Left cardiac atrium (tissue), 4 donors: ENCODE measurements at regions of chr9 and their contacts with region 1.

Region 1: GRCh38 chr9:406886-407654 is 192.4 kb downstream of the DOCK8 start:
- DNase-seq: no peak
- ATAC-seq: peak; percentile 54 to 84

Region 2: DNA sequence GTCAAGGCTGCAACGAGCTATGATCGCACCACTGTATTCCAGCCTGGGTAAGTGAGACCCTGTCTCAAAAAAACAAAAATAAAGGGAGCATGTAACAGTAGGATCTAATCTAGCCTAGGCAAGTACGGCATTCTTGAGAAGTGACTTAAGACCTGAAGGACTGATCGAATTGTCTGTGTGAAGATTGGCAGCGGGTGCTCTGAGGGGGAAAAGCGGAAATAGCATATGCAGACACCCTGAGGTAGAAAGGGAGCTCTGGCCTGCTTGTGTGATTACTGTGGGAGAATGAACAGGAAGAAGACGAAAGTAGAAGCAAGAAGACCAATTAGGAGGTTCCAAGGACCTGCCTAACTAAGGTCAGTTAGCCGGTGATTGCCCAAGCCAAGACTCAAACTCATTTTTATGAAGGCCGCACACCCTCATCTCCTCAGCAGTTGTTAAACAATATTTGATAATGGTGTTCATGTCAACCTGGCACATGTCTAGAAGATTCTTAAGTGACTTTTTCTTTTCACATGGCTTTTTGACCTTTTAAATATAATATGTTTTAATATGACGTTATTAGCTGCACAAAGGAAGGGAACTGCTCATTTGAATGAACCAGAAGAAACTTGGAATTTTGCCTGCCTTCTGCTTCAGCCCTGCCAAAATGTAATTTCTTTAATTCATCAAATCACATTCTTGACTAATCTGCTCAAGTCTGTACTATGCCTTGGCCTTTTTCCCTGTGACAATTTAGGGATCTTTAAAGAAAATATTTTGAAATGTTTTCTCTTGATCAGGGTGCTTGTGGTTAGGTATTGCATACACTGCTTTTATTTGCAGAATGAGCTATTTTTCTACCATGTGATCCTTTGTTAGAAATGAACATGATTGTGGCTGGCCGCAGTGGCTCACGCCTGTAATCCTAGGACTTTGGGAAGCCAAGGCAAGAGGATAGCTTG is 145.2 kb after region 1 on chr9:
- intact Hi-C with region 1: loop called in 1 of 2 experiments (anchors 10 kb)
- DNase-seq: no peak
- ATAC-seq: peak; percentile 54 to 58

Region 3: GRCh38 chr9:607417-607816 is 200.3 kb after region 1 on chr9:
- intact Hi-C with region 1: loop called in 1 of 2 experiments (anchors 10 kb)
- DNase-seq: no peak
- ATAC-seq: no peak

Region 4: DNA sequence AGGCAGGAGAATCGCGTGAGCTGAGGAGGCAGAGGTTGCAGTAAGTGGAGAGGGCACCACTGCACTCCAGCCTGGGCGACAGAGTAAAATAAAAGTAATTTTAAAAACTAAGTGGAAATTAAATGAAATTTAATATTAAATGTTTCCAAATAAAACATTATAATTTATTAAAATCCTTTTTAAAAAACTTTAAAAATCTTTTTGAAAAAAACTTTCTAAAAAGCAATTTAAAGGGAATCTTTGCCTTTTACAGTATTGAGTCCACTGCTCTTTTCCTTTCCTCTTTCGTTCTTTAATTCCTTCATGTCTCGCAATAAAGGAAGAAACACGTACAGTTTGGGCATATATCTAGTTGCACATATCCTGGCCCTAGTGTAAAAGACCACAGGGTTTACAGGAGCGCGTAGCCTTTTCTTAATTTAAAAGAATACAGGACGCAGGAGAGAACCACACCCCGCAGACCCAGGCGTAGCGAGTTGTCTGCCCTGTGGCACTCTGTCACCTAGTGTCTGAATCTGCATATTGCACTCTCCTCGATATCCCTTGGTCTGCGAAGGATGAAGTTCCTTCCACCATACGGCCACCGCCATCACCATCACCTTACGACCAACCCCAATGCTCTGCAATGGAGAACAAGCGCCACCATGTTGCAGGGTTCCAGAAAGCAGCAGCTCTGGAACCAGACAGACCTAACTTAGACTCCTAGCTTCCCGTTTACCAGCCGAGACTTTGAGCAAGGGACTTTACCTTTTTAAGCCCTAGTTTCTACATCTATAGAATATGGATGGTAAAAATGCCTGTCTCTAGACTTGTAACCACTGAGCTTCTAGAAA is 356.8 kb after region 1 on chr9:
- intact Hi-C with region 1: loop called (anchors 5 to 10 kb)
- DNase-seq: peak; percentile 73
- ATAC-seq: peak; percentile 96 to 98

Region 5: GRCh38 chr9:792282-793260 is 385.5 kb after region 1 on chr9:
- intact Hi-C with region 1: loop called in 1 of 2 experiments (anchors 10 kb)
- DNase-seq: no peak
- ATAC-seq: no peak